B cell (primary cell): ENCODE measurements at regions of chr4 and their contacts with region 1.

Region 1: GRCh38 chr4:82428969-82429727 is 1.1 kb downstream of the HNRNPDL start:
- DNase-seq: peak; percentile 97
- ATAC-seq: peak; percentile 64
- H3K4me3 ChIP-seq: peak overlapping the region; percentile 98 to 99 (median 98)
- H3K4me3 Mint-ChIP-seq: peak overlapping the region; percentile 100
- H3K27ac ChIP-seq: peak overlapping the region; percentile 96 to 100
- H3K27ac Mint-ChIP-seq: peak overlapping the region; percentile 100
- H3K4me1 ChIP-seq: peaks cover 27 to 32% of the 10 kb centered on the region in 2 donors
- H3K4me1 Mint-ChIP-seq: peaks cover 48% of the 10 kb centered on the region
- H3K27me3 ChIP-seq: no peaks in the 10 kb centered on the region
- H3K27me3 Mint-ChIP-seq: no peaks in the 10 kb centered on the region
- CTCF ChIP-seq: peak; percentile 97

Region 2: GRCh38 chr4:82005158-82005557 is 424.0 kb before region 1 on chr4:
- CTCF ChIA-PET with region 1: no interaction called
- POLR2A ChIA-PET with region 1: no interaction called
- intact Hi-C with region 1: no loop called
- DNase-seq: no peak
- ATAC-seq: no peak
- H3K4me3 ChIP-seq: no peak overlapping the region
- H3K4me3 Mint-ChIP-seq: no peak overlapping the region
- H3K27ac ChIP-seq: no peak overlapping the region
- H3K27ac Mint-ChIP-seq: no peak overlapping the region
- H3K4me1 ChIP-seq: no peaks in the 10 kb centered on the region
- H3K4me1 Mint-ChIP-seq: no peaks in the 10 kb centered on the region
- H3K27me3 ChIP-seq: peaks cover 0 to 6% (median 0%) of the 10 kb centered on the region in 4 experiments
- H3K27me3 Mint-ChIP-seq: peaks cover 29% of the 10 kb centered on the region
- CTCF ChIP-seq: no peak

Region 3: DNA sequence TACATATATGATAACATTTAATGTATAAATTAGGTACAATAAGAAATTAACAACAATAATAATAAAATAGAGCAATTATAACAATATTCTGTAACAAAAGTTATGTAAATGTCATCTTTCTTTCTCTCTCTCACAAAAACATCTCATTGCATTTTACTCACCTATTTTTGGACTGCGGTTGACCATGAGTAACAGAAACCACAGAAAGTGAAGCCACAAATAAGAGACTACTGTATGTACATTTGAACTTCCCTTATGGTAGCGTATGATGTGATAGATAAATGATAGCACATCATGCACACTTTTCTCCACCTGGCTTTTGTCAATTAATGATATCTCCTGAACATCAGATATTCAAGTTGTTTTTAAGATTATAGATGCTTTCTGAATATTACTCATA is 135.8 kb before region 1 on chr4:
- CTCF ChIA-PET with region 1: no interaction called
- POLR2A ChIA-PET with region 1: no interaction called
- intact Hi-C with region 1: loop called (anchors 2 kb)
- DNase-seq: peak; percentile 72
- ATAC-seq: peak; percentile 88
- H3K4me3 ChIP-seq: peak overlapping the region in 1 of 5 experiments; percentile 42
- H3K4me3 Mint-ChIP-seq: peak overlapping the region; percentile 63
- H3K27ac ChIP-seq: peak overlapping the region in 1 of 2 donors; percentile 43
- H3K27ac Mint-ChIP-seq: peak overlapping the region; percentile 54
- H3K4me1 ChIP-seq: peaks cover 25 to 33% of the 10 kb centered on the region in 2 donors
- H3K4me1 Mint-ChIP-seq: peaks cover 18% of the 10 kb centered on the region
- H3K27me3 ChIP-seq: no peaks in the 10 kb centered on the region
- H3K27me3 Mint-ChIP-seq: no peaks in the 10 kb centered on the region
- CTCF ChIP-seq: no peak

Region 4: DNA sequence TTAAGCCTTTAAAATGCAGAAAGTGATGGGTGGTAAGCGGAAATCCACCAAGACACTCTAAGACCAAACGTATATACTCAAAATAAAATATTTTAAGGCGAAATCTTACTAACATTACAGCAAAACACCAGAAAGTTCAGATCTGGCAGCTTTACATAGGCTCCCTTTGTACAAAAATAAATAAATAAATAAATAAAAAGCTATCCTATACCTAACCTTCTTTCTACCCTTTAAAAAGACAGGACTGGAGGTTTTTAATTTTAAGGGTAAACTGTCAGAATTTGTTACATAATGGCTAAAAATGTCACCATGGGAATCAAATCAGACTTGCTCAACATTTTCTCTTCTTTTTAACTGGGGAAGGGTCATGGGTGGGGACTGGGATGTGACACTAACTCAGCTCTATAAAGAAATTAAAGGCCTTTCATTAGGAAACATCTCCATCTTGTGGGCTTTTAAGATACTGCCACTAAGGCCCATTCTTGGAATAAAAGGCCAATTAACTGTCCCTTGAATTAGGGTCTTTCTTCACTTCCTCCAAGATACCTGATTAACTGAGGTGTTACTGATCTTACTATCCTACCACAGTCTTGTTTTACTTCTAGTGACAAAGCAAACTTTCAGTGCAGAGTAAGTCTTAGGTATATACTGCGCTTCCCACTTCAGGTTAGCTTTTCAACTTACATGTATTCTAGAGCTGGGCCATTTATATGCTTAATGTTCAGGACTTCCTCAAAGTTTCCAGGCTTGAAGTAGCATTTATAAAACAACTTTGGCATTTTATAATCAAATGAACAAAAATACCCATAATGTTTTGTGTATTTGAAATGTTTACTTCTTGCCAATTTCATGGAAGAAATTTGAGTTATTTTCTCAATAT is 68.6 kb before region 1 on chr4:
- CTCF ChIA-PET with region 1: interaction called, 16 read pairs
- POLR2A ChIA-PET with region 1: interaction called, 9 read pairs
- intact Hi-C with region 1: no loop called
- DNase-seq: peak; percentile 66
- ATAC-seq: peak; percentile 65
- H3K4me3 ChIP-seq: no peak overlapping the region
- H3K4me3 Mint-ChIP-seq: no peak overlapping the region
- H3K27ac ChIP-seq: peak overlapping the region in 1 of 2 donors; percentile 69
- H3K27ac Mint-ChIP-seq: peak overlapping the region; percentile 74
- H3K4me1 ChIP-seq: peaks cover 37 to 67% of the 10 kb centered on the region in 2 donors
- H3K4me1 Mint-ChIP-seq: peaks cover 75% of the 10 kb centered on the region
- H3K27me3 ChIP-seq: no peaks in the 10 kb centered on the region
- H3K27me3 Mint-ChIP-seq: no peaks in the 10 kb centered on the region
- CTCF ChIP-seq: peak; percentile 85

Region 5: GRCh38 chr4:82462415-82462831 is 33.3 kb after region 1 on chr4:
- CTCF ChIA-PET with region 1: interaction called, 8 read pairs
- POLR2A ChIA-PET with region 1: no interaction called
- intact Hi-C with region 1: loop called (anchors 1 kb)
- DNase-seq: peak; percentile 86
- ATAC-seq: peak; percentile 98
- H3K4me3 ChIP-seq: no peak overlapping the region
- H3K4me3 Mint-ChIP-seq: no peak overlapping the region
- H3K27ac ChIP-seq: no peak overlapping the region
- H3K27ac Mint-ChIP-seq: no peak overlapping the region
- H3K4me1 ChIP-seq: peaks cover 5 to 8% of the 10 kb centered on the region in 2 donors
- H3K4me1 Mint-ChIP-seq: peaks cover 25% of the 10 kb centered on the region
- H3K27me3 ChIP-seq: no peaks in the 10 kb centered on the region
- H3K27me3 Mint-ChIP-seq: no peaks in the 10 kb centered on the region
- CTCF ChIP-seq: peak; percentile 87

Region 6: GRCh38 chr4:82473621-82474164 is 44.5 kb after region 1 on chr4:
- CTCF ChIA-PET with region 1: no interaction called
- POLR2A ChIA-PET with region 1: no interaction called
- intact Hi-C with region 1: no loop called
- DNase-seq: no peak
- ATAC-seq: no peak
- H3K4me3 ChIP-seq: no peak overlapping the region
- H3K4me3 Mint-ChIP-seq: no peak overlapping the region
- H3K27ac ChIP-seq: no peak overlapping the region
- H3K27ac Mint-ChIP-seq: no peak overlapping the region
- H3K4me1 ChIP-seq: no peaks in the 10 kb centered on the region
- H3K4me1 Mint-ChIP-seq: no peaks in the 10 kb centered on the region
- H3K27me3 ChIP-seq: no peaks in the 10 kb centered on the region
- H3K27me3 Mint-ChIP-seq: no peaks in the 10 kb centered on the region
- CTCF ChIP-seq: no peak

Region 7: GRCh38 chr4:82890901-82891706 is 462.0 kb after region 1 on chr4 and contains the start of gene SEC31A:
- CTCF ChIA-PET with region 1: no interaction called
- POLR2A ChIA-PET with region 1: interaction called, 5 read pairs
- intact Hi-C with region 1: loop called (anchors 1 kb)
- DNase-seq: peak; percentile 98
- ATAC-seq: peak; percentile 92
- H3K4me3 ChIP-seq: peak within 1 kb of the TSS; percentile 76 to 94 (median 85)
- H3K4me3 Mint-ChIP-seq: peak within 1 kb of the TSS; percentile 92
- H3K27ac ChIP-seq: peak within 1 kb of the TSS; percentile 87 to 93
- H3K27ac Mint-ChIP-seq: peak within 1 kb of the TSS; percentile 97
- H3K4me1 ChIP-seq: peaks cover 17 to 18% of the 10 kb centered on the region in 2 donors
- H3K4me1 Mint-ChIP-seq: peaks cover 35% of the 10 kb centered on the region
- H3K27me3 ChIP-seq: no peaks in the 10 kb centered on the region
- H3K27me3 Mint-ChIP-seq: no peaks in the 10 kb centered on the region
- CTCF ChIP-seq: peak; percentile 2
- total RNA-seq, gene SEC31A: 134 and 141 TPM in 2 replicates

Region 8: GRCh38 chr4:83034630-83035494 is 605.7 kb after region 1 on chr4 and contains the start of gene COPS4:
- CTCF ChIA-PET with region 1: no interaction called
- POLR2A ChIA-PET with region 1: interaction called, 8 read pairs
- intact Hi-C with region 1: loop called (anchors 1 kb)
- DNase-seq: peak; percentile 99
- ATAC-seq: peak; percentile 95
- H3K4me3 ChIP-seq: peak within 1 kb of the TSS; percentile 80 to 94 (median 91)
- H3K4me3 Mint-ChIP-seq: peak within 1 kb of the TSS; percentile 98
- H3K27ac ChIP-seq: peak within 1 kb of the TSS; percentile 84 to 86
- H3K27ac Mint-ChIP-seq: peak within 1 kb of the TSS; percentile 98
- H3K4me1 ChIP-seq: peaks cover 10 to 16% of the 10 kb centered on the region in 2 donors
- H3K4me1 Mint-ChIP-seq: peaks cover 34% of the 10 kb centered on the region
- H3K27me3 ChIP-seq: no peaks in the 10 kb centered on the region
- H3K27me3 Mint-ChIP-seq: no peaks in the 10 kb centered on the region
- CTCF ChIP-seq: peak; percentile 34
- total RNA-seq, gene COPS4: 24.5 and 32.8 TPM in 2 replicates